B cell (primary cell): ENCODE measurements at regions of chr3 and their contacts with region 1.

Region 1: DNA sequence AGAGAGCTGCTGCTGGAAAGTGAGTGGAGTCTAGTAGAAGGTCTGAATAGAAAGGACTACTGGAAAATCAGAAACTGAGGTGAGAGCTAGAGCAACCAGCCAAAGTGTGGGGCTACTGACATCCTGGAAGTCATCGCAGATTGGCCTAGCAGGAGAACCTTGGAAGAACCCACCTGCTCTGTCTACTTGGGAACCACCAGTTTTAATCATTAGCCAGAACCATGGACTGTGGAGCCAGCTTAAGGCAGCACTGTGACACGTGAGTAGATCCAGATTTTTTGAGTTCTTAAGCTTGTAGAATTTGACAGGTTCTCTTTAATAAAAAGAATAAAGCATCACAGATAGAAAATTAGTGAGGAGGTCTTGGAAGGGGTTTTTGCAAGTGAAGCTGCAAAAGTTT is 179.1 kb upstream of the PEX5L start:
- DNase-seq: no peak
- ATAC-seq: no peak
- H3K4me3 ChIP-seq: no peak overlapping the region
- H3K4me3 Mint-ChIP-seq: no peak overlapping the region
- H3K27ac ChIP-seq: no peak overlapping the region
- H3K27ac Mint-ChIP-seq: no peak overlapping the region
- H3K4me1 ChIP-seq: no peaks in the 10 kb centered on the region
- H3K4me1 Mint-ChIP-seq: no peaks in the 10 kb centered on the region
- H3K27me3 ChIP-seq: no peaks in the 10 kb centered on the region
- H3K27me3 Mint-ChIP-seq: no peaks in the 10 kb centered on the region
- CTCF ChIP-seq: no peak

Region 2: DNA sequence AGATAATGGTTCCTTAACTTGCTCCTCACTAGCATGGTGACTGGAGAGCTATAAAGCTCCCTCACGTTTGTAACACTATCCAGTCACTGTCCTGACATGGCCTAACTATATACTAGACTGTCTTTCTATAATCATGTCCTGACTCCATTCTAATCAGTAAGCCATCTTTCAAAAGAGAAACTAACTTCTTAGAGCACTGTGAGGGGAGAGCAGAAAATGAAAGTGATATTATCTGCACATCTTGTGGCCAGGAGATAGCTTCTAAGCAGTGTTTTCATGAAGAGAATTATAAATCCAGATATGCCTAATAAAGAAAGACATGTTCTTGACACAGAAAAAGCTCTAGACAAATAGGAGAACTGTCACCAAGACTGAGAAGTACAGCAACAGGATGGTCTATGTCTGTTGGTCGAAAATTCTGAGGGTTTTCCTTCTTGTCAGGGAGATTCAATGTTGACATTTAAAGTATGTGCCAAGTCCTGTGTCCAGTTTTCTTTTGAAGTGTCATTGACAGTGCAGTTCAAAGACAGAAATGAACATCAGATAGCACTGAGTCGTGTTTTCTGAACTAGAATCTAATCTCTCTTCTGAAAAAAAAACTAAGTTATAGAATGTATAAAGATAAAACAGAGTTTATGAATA is 51.5 kb after region 1 on chr3:
- CTCF ChIA-PET with region 1: no interaction called
- POLR2A ChIA-PET with region 1: no interaction called
- intact Hi-C with region 1: loop called (anchors 2 kb)
- DNase-seq: no peak
- ATAC-seq: no peak
- H3K4me3 ChIP-seq: no peak overlapping the region
- H3K4me3 Mint-ChIP-seq: peak overlapping the region; percentile 60
- H3K27ac ChIP-seq: peak overlapping the region in 1 of 2 donors; percentile 21
- H3K27ac Mint-ChIP-seq: peak overlapping the region; percentile 78
- H3K4me1 ChIP-seq: no peaks in the 10 kb centered on the region
- H3K4me1 Mint-ChIP-seq: peaks cover 10% of the 10 kb centered on the region
- H3K27me3 ChIP-seq: no peaks in the 10 kb centered on the region
- H3K27me3 Mint-ChIP-seq: no peaks in the 10 kb centered on the region
- CTCF ChIP-seq: no peak